ENCODE measurements at regions of chr16 and their contacts with region 1.

Region 1: GRCh38 chr16:27367461-27368357 is 34.3 kb upstream of the IL21R start:
- DNase-seq: peak; percentile 72
- H3K4me3 ChIP-seq: no peak overlapping the region
- H3K27ac ChIP-seq: no peak overlapping the region
- H3K4me1 ChIP-seq: peaks cover 4% of the 10 kb centered on the region
- H3K27me3 ChIP-seq: no peaks in the 10 kb centered on the region
- CTCF ChIP-seq: peak; percentile 31 to 60 (median 55)
- POLR2A ChIP-seq: no peak

Region 2: DNA sequence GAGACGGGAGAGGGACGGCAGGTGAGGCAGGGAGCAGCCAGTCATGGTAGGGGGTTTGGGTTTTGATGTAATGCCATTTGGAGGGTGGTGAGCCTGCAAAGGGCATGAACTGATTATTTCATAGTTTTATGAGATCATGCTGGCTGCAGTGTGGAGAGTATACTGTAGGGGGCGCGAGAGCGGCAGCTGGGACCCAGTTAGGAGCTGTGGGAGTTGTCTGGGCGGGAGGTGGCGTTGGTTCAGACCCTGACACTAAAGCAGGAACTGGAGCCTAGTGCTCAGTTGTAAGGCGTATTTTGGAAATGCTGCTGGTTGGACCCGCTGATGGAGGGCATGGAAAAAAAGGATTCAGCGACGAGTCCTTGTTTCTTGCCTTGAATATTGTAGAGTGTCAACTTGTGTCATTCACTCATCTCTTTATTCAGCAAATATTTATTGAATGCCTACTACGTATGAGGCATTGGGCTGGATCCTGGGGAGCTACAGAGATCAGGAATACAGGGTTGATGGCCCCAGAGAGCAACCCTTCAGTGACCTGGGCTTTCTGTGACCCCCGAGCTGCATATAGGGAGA is 188.1 kb before region 1 on chr16:
- intact Hi-C with region 1: loop called (anchors 5 kb)
- DNase-seq: peak; percentile 89
- H3K4me3 ChIP-seq: no peak overlapping the region
- H3K27ac ChIP-seq: no peak overlapping the region
- H3K4me1 ChIP-seq: peaks cover 3% of the 10 kb centered on the region
- H3K27me3 ChIP-seq: no peaks in the 10 kb centered on the region
- CTCF ChIP-seq: peak; percentile 69 to 83 (median 83)
- POLR2A ChIP-seq: no peak

Region 3: GRCh38 chr16:27235055-27235937 is 132.4 kb before region 1 on chr16:
- intact Hi-C with region 1: loop called (anchors 5 kb)
- DNase-seq: peak; percentile 90
- H3K4me3 ChIP-seq: no peak overlapping the region
- H3K27ac ChIP-seq: peak overlapping the region; percentile 0 to 7
- H3K4me1 ChIP-seq: peaks cover 22% of the 10 kb centered on the region
- H3K27me3 ChIP-seq: no peaks in the 10 kb centered on the region
- CTCF ChIP-seq: peak; percentile 55 to 70 (median 64)
- POLR2A ChIP-seq: no peak

Region 4: DNA sequence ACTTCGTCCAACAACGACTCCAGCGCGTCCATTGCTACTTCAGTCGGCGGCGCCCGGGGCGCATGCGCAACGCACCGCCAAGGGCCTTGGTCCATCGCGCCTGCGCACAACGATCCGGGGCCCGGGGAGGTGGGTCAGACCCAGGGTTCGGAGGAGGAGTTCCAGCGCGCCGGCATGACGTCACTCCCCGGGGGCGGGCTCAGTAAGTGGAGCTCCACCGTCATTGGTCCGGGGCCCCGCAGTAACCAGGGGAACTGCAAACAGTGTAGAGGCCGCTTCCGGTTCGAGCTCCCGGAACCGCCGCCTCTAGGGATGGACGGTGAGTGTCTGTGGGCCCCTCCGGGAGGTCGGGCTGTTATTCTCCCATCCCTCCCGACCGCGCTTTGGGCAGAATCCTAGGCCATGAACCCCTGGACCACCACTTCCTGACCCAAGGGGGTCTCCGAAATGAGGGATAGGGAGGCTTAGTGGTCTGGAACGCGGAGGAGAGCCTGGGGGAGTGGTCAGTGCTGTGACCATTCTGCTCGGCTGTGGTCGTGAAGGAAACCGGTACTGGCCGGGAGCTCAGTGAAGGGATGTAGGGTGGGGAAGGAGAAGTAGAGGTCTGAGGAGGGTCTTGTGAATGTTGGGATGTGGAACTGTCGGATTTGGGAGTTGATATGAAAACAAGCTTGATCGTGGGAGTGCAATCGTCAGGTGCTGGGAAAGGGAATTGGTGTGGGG is 182.3 kb after region 1 on chr16 and contains the starts of genes GTF3C1 and KATNIP:
- intact Hi-C with region 1: no loop called
- DNase-seq: peak; percentile 100
- H3K4me3 ChIP-seq: peak within 1 kb of the TSS; percentile 77 to 80
- H3K27ac ChIP-seq: peak within 1 kb of the TSS; percentile 52 to 71
- H3K4me1 ChIP-seq: peaks cover 24% of the 10 kb centered on the region
- H3K27me3 ChIP-seq: no peaks in the 10 kb centered on the region
- CTCF ChIP-seq: no peak
- POLR2A ChIP-seq: peak; percentile 1
- total RNA-seq, gene GTF3C1: 129 to 154 TPM
- total RNA-seq, gene KATNIP: 48.6 to 80.2 TPM

Region 5: DNA sequence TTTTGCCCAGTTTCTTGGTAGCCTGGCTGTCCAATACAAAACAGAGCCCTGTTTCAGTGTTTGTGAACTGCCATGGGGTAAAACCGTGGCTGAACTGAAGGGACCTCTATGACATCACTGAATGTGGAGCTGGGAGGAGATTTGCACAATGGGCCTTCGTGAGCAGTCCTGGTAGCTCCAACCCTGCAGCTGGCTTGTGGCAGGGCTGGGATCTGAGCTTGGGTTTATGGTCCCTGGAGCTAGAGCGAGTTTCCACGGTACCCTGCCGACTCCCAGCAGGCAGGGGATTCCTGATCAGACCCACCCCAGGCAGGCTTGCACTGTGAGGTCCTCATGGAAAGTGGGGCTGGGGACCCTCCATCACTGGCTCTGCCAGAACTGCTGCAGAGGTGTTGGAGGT is 448.9 kb after region 1 on chr16:
- intact Hi-C with region 1: no loop called
- DNase-seq: no peak
- H3K4me3 ChIP-seq: no peak overlapping the region
- H3K27ac ChIP-seq: no peak overlapping the region
- H3K4me1 ChIP-seq: no peaks in the 10 kb centered on the region
- H3K27me3 ChIP-seq: no peaks in the 10 kb centered on the region
- CTCF ChIP-seq: no peak
- POLR2A ChIP-seq: no peak